ENCODE measurements at regions of chr3 and their contacts with region 1.

Region 1: GRCh38 chr3:177359593-177360357 is 162.5 kb upstream of the TBL1XR1 start:
- DNase-seq: peak; percentile 93
- H3K4me3 Mint-ChIP-seq: peak overlapping the region; percentile 71
- H3K27ac Mint-ChIP-seq: peak overlapping the region; percentile 91
- H3K4me1 Mint-ChIP-seq: peaks cover 51% of the 10 kb centered on the region
- H3K27me3 Mint-ChIP-seq: peaks cover 2% of the 10 kb centered on the region

Region 2: GRCh38 chr3:177144923-177145780 is 214.6 kb before region 1 on chr3:
- intact Hi-C with region 1: loop called (anchors 1 kb)
- DNase-seq: no peak
- H3K4me3 Mint-ChIP-seq: peak overlapping the region; percentile 61
- H3K27ac Mint-ChIP-seq: peak overlapping the region; percentile 86
- H3K4me1 Mint-ChIP-seq: peaks cover 62% of the 10 kb centered on the region
- H3K27me3 Mint-ChIP-seq: no peaks in the 10 kb centered on the region

Region 3: GRCh38 chr3:177314897-177315296 is 44.9 kb before region 1 on chr3:
- intact Hi-C with region 1: loop called (anchors 1 kb)
- DNase-seq: no peak
- H3K4me3 Mint-ChIP-seq: no peak overlapping the region
- H3K27ac Mint-ChIP-seq: peak overlapping the region; percentile 49
- H3K4me1 Mint-ChIP-seq: peaks cover 12% of the 10 kb centered on the region
- H3K27me3 Mint-ChIP-seq: peaks cover 2% of the 10 kb centered on the region

Region 4: GRCh38 chr3:177345049-177345972 is 14.5 kb before region 1 on chr3:
- intact Hi-C with region 1: loop called (anchors 1 kb)
- DNase-seq: peak; percentile 67
- H3K4me3 Mint-ChIP-seq: peak overlapping the region; percentile 3
- H3K27ac Mint-ChIP-seq: peak overlapping the region; percentile 83
- H3K4me1 Mint-ChIP-seq: peaks cover 39% of the 10 kb centered on the region
- H3K27me3 Mint-ChIP-seq: no peaks in the 10 kb centered on the region

Region 5: GRCh38 chr3:177426878-177427495 is 67.2 kb after region 1 on chr3:
- intact Hi-C with region 1: loop called (anchors 1 kb)
- DNase-seq: peak; percentile 58
- H3K4me3 Mint-ChIP-seq: peak overlapping the region; percentile 54
- H3K27ac Mint-ChIP-seq: peak overlapping the region; percentile 85
- H3K4me1 Mint-ChIP-seq: peaks cover 35% of the 10 kb centered on the region
- H3K27me3 Mint-ChIP-seq: peaks cover 2% of the 10 kb centered on the region

Region 6: DNA sequence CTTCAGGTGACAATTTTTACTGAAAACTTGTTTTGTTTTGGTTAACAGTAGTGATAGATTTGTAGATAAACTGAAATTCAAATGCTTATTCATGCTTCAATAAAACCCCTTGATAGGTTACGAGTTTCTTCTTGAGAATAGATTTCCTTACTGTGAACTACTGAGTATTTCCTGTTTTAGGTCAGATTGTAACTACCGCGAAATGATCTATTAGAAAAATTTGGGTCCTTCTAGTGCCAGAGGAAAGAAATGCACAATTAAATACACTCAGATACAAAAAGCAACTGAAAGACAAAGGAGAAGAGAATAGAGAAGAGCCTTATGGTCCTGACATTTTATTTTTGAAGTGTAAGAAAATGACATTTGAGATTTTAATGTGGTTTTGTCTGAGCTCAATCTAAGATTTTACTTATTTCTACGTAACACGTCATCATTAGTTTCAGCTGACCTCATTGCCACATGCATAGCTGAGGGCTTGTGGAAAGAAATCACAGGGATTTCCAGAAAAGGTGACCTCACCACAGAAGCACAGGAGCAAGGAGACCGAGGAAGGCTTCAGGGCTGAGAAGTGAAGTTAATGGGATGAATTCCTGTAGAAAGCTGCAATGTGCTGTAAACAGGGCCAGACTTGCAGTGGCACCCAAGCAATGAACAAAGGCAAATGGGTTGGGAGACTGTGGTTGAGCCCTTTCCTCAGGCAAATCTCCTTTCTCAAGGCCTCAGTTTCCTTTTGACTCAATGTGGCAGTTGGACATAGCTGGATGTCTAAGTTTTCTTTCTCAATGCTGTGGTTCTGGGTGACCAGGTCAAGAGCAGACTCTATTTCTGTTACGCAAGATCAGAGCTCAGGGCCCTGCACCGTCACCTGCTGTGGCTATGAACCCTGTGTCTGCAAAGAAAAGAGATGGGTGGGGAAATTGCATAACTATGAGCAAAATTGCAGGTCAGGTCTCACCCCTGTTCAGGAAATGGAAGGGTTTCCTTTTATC is 89.5 kb after region 1 on chr3:
- intact Hi-C with region 1: no loop called
- DNase-seq: no peak
- H3K4me3 Mint-ChIP-seq: peak overlapping the region; percentile 54
- H3K27ac Mint-ChIP-seq: peak overlapping the region; percentile 20
- H3K4me1 Mint-ChIP-seq: peaks cover 14% of the 10 kb centered on the region
- H3K27me3 Mint-ChIP-seq: no peaks in the 10 kb centered on the region

Region 7: GRCh38 chr3:177787279-177788041 is 427.7 kb after region 1 on chr3:
- intact Hi-C with region 1: loop called (anchors 2 kb)
- DNase-seq: no peak
- H3K4me3 Mint-ChIP-seq: no peak overlapping the region
- H3K27ac Mint-ChIP-seq: peak overlapping the region; percentile 53
- H3K4me1 Mint-ChIP-seq: peaks cover 15% of the 10 kb centered on the region
- H3K27me3 Mint-ChIP-seq: no peaks in the 10 kb centered on the region